AG04450 (cell line): ENCODE measurements at regions of chr17 and their contacts with region 1.

Region 1: GRCh38 chr17:7687908-7688807 is at the start of gene WRAP53:
- DNase-seq: peak; percentile 98
- H3K4me3 ChIP-seq: peak within 1 kb of the TSS; percentile 97
- H3K27ac ChIP-seq: peak within 1 kb of the TSS; percentile 99
- H3K27me3 ChIP-seq: no peaks in the 10 kb centered on the region
- CTCF ChIP-seq: peak; percentile 97
- polyA plus RNA-seq, gene WRAP53: 4.1 and 4.5 TPM in 2 replicates

Region 2: GRCh38 chr17:7572588-7573323 is 115.4 kb before region 1 on chr17:
- CTCF ChIA-PET with region 1: no interaction called
- POLR2A ChIA-PET with region 1: interaction called, 13 read pairs
- DNase-seq: peak; percentile 98
- H3K4me3 ChIP-seq: peak overlapping the region; percentile 98
- H3K27ac ChIP-seq: peak overlapping the region; percentile 96
- H3K27me3 ChIP-seq: no peaks in the 10 kb centered on the region
- CTCF ChIP-seq: peak; percentile 6; the same call in 1 of the 2 replicates

Region 3: GRCh38 chr17:7589204-7589868 is 98.8 kb before region 1 on chr17:
- CTCF ChIA-PET with region 1: interaction called, 39 read pairs
- POLR2A ChIA-PET with region 1: interaction called, 19 read pairs
- DNase-seq: no peak
- H3K4me3 ChIP-seq: peak overlapping the region; percentile 34
- H3K27ac ChIP-seq: peak overlapping the region; percentile 94
- H3K27me3 ChIP-seq: no peaks in the 10 kb centered on the region
- CTCF ChIP-seq: peak; percentile 87

Region 4: GRCh38 chr17:7627250-7628121 is 60.7 kb before region 1 on chr17 and contains the start of gene SAT2:
- CTCF ChIA-PET with region 1: interaction called, 134 read pairs
- POLR2A ChIA-PET with region 1: interaction called, 40 read pairs
- DNase-seq: peak; percentile 86
- H3K4me3 ChIP-seq: peak within 1 kb of the TSS; percentile 86
- H3K27ac ChIP-seq: peak within 1 kb of the TSS; percentile 91
- H3K27me3 ChIP-seq: no peaks in the 10 kb centered on the region
- CTCF ChIP-seq: no peak
- polyA plus RNA-seq, gene SAT2: 54.1 and 61.5 TPM in 2 replicates

Region 5: DNA sequence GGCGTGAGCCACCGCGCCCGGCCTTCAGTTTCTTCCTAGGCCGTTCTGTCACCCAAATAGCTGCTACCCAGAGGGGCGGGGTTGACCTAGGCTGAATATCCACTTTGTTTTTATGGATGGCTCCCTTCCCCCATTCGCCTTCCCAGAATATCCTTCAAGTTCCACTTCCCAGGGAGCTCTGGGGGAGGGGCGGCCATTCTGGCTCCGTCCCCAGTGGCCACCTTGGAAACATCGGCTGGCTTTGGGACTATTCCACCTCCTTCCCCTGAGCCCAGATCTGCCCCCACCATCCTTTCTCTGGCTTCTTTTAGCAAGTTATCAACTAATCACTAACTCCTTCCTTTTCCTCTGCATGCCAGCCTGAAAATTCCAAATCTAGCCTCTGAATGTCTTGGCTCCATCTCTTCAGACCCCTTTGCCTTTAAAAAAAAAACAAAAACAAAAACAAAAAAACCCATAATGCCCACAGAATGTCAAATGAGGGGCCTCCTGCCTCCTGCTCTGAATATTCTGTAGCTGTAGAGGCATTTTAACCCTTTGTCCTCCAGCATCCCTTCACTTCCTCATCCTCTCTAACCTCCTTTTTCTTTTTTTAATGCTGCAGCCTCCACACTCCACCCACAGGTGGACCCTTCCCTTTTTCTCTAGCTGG is 31.1 kb before region 1 on chr17:
- CTCF ChIA-PET with region 1: interaction called, 13 read pairs
- POLR2A ChIA-PET with region 1: interaction called, 3 read pairs
- DNase-seq: no peak
- H3K4me3 ChIP-seq: no peak overlapping the region
- H3K27ac ChIP-seq: no peak overlapping the region
- H3K27me3 ChIP-seq: peaks cover 34% of the 10 kb centered on the region
- CTCF ChIP-seq: no peak

Region 6: DNA sequence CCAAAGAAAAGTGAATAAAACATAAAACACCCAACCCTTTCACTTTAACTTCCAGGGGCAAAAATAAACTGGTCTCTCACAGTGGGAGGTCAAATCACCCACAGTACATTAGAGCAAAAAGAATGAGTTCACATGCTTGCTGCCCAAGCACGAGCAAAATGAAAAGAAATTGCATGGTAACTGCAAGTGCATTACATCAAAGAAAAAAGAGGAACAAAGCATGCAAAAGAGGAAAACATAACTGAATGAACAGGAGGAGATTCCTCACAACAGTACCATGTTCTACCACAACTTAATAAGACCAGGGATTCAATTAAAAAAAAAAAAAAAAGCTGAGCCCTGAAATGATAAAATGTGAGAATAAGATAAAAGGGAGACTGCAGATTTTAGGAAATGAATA is 41.7 kb after region 1 on chr17:
- CTCF ChIA-PET with region 1: interaction called, 10 read pairs
- POLR2A ChIA-PET with region 1: no interaction called
- DNase-seq: no peak
- H3K4me3 ChIP-seq: no peak overlapping the region
- H3K27ac ChIP-seq: no peak overlapping the region
- H3K27me3 ChIP-seq: peaks cover 8% of the 10 kb centered on the region
- CTCF ChIP-seq: no peak